Panc1 (cell line): ENCODE measurements at regions of chr11 and their contacts with region 1.

Region 1: GRCh38 chr11:74255741-74256369 is 55.6 kb downstream of the P4HA3 start:
- DNase-seq: peak; percentile 71
- ATAC-seq: peak; percentile 76
- H3K4me3 ChIP-seq: no peak overlapping the region
- H3K27ac ChIP-seq: no peak overlapping the region
- H3K4me1 ChIP-seq: no peaks in the 10 kb centered on the region
- H3K27me3 ChIP-seq: no peaks in the 10 kb centered on the region
- CTCF ChIP-seq: peak; percentile 95

Region 2: DNA sequence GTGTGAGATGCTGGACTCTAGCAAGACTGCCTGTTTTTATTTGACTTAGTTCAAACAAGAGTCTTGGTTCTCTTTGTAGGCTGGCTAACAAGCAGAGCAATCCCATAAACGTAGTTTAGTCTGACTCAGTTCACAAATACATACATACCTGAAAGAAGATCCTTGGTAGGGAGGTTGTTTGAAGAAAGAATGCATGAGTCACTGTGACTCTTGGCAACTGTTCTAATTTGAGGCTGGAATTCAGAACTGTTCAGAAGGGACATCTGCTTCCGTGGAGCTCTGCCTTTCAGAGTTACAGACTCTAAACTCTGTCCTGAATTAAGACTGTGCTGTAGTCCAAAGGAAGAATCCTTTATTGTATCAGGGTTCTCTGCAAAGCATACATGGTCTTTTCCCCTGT is 117.3 kb before region 1 on chr11:
- CTCF ChIA-PET with region 1: no interaction called
- POLR2A ChIA-PET with region 1: no interaction called
- in situ Hi-C with region 1: no loop called
- intact Hi-C with region 1: no loop called
- DNase-seq: peak; percentile 96
- ATAC-seq: peak; percentile 98
- H3K4me3 ChIP-seq: peak overlapping the region in 1 of 2 experiments; percentile 10; a peak in 1 of 4 replicates
- H3K27ac ChIP-seq: peak overlapping the region; percentile 98
- H3K4me1 ChIP-seq: peaks cover 81% of the 10 kb centered on the region
- H3K27me3 ChIP-seq: no peaks in the 10 kb centered on the region
- CTCF ChIP-seq: no peak

Region 3: GRCh38 chr11:74237541-74237940 is 18.3 kb before region 1 on chr11:
- CTCF ChIA-PET with region 1: interaction called, 5 read pairs
- POLR2A ChIA-PET with region 1: interaction called, 13 read pairs
- in situ Hi-C with region 1: no loop called
- intact Hi-C with region 1: no loop called
- DNase-seq: no peak
- ATAC-seq: no peak
- H3K4me3 ChIP-seq: no peak overlapping the region
- H3K27ac ChIP-seq: no peak overlapping the region
- H3K4me1 ChIP-seq: no peaks in the 10 kb centered on the region
- H3K27me3 ChIP-seq: no peaks in the 10 kb centered on the region
- CTCF ChIP-seq: no peak

Region 4: DNA sequence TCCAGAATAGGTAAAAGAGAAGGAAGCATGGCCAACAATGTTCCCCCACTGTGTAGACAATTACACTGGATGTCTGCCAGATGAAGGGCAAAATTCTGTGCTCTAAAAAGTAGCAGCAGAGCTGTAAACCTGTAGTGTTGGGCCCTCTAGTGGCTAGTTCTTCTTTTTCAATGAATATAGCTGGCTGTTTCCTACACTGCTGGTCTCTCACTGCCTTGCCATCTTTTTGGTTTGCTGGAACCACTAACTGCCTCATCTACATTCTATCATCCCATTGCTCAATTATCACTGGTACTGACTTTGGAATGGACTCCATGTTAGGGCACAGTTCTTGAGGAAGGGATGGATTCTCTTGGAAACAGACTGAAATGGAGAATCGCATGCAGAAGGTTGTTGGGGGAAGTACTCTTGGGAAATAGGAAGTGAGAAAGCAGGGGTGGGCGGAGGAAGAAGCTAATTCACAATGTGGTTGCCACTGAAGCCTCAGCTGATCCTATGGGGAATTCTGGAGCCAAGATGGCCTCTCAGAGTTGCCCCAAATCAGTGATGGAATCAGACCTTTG is 193.6 kb after region 1 on chr11:
- CTCF ChIA-PET with region 1: interaction called, 36 read pairs
- POLR2A ChIA-PET with region 1: interaction called, 8 read pairs
- in situ Hi-C with region 1: no loop called
- intact Hi-C with region 1: loop called (anchors 2 kb)
- DNase-seq: peak; percentile 65
- ATAC-seq: peak; percentile 87
- H3K4me3 ChIP-seq: no peak overlapping the region
- H3K27ac ChIP-seq: no peak overlapping the region
- H3K4me1 ChIP-seq: no peaks in the 10 kb centered on the region
- H3K27me3 ChIP-seq: peaks cover 2% of the 10 kb centered on the region; the same call in 1 of the 2 replicates
- CTCF ChIP-seq: peak; percentile 86

Region 5: DNA sequence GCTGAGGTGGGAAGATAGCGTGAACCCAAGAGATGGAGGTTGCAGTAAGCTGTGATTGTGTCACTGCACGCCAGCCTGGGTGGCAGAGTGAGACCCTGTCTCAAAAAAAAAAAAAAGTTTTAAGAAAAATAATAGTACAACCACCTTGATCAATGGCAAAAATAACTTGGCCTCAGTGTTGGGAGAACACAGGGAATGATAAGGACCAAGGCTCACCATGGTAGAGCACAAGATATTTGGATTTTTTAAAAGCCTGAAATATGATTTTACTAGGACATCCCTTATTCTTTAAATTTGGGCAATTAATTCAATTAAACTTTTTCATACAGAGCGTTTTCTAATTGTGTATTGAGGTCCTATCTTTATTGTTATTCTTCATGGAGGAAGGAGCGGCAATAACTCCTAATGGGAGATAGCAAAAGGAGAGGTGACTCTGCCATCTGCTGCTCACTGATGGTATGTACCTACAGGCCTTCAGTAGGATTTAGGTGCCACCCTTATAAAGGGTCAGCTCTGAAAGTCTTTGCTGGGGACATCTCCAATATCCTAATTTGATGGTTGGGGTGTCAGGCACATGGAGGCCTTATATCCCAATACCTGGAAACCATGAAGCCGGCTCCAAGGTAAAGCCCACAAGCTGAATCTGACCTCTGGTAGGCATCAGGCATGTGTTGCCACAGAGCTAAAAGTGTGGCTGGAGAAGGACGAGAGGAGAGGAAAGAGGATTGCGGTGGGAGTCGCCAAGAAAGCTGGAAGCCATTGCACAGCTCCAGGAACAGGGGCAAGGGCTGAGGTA is 314.6 kb after region 1 on chr11:
- CTCF ChIA-PET with region 1: interaction called, 14 read pairs
- POLR2A ChIA-PET with region 1: no interaction called
- in situ Hi-C with region 1: no loop called
- intact Hi-C with region 1: no loop called
- DNase-seq: peak; percentile 25
- ATAC-seq: peak; percentile 96
- H3K4me3 ChIP-seq: no peak overlapping the region
- H3K27ac ChIP-seq: no peak overlapping the region
- H3K4me1 ChIP-seq: no peaks in the 10 kb centered on the region
- H3K27me3 ChIP-seq: no peaks in the 10 kb centered on the region; the same call in 1 of the 2 replicates
- CTCF ChIP-seq: peak; percentile 88

Region 6: DNA sequence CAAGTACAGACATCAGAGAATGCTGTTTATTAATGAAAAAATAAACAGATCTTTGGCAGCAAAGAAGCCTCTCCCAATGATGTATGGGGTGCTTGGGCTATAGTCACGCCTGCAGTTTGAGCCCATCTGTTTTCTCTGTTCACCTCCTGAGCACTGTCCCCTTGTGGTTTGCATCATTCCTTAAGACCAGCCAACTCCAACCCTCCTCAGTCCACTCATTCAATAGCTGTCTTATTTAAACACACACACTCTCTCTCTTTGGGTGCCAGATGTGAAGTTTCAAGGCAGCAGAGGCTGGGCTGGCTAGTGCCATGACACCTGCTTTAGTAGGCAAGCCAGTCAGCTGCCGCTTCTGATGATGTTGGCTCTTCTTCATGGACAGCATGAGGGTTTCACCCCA is 394.6 kb after region 1 on chr11:
- CTCF ChIA-PET with region 1: no interaction called
- POLR2A ChIA-PET with region 1: no interaction called
- in situ Hi-C with region 1: no loop called
- intact Hi-C with region 1: no loop called
- DNase-seq: no peak
- ATAC-seq: no peak
- H3K4me3 ChIP-seq: no peak overlapping the region
- H3K27ac ChIP-seq: no peak overlapping the region
- H3K4me1 ChIP-seq: no peaks in the 10 kb centered on the region
- H3K27me3 ChIP-seq: no peaks in the 10 kb centered on the region
- CTCF ChIP-seq: no peak